Vagina (tissue), 2 donors: ENCODE measurements at regions of chr16 and their contacts with region 1.

Region 1: GRCh38 chr16:74998481-74999218 is at the start of gene ZNRF1:
- DNase-seq: peak in 1 of 2 donors; percentile 93
- H3K4me3 ChIP-seq: peak within 1 kb of the TSS; percentile 76 to 78
- H3K27ac ChIP-seq: peak within 1 kb of the TSS; percentile 85
- H3K4me1 ChIP-seq: peaks cover 36% of the 10 kb centered on the region
- H3K27me3 ChIP-seq: no peaks in the 10 kb centered on the region
- CTCF ChIP-seq: peak; percentile 41 to 90 (median 85)
- POLR2A ChIP-seq: peak in 1 of 2 donors; percentile 34
- total RNA-seq, gene ZNRF1: 20.1 TPM

Region 2: DNA sequence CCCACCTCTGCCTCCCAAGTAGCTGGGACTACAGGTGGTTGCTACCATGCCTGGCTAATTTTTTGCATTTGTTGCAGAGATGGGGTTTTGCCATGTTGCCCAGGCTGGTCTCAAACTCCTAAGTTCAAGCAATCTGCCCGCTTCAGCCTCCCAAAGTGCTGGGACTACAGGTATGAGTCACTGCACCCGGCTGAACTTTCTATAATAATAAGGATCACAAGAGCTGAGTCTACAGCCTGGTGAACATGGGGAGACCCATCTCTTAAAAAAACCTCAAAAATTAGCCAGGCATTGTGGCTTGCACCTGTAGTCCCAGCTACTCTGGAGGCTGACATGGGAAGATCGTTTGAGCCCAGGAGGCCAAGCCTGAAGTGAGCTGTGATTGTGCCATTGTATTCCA is 67.2 kb before region 1 on chr16:
- intact Hi-C with region 1: no loop called
- DNase-seq: no peak
- H3K4me3 ChIP-seq: no peak overlapping the region
- H3K27ac ChIP-seq: no peak overlapping the region
- H3K4me1 ChIP-seq: no peaks in the 10 kb centered on the region
- H3K27me3 ChIP-seq: no peaks in the 10 kb centered on the region
- CTCF ChIP-seq: no peak
- POLR2A ChIP-seq: no peak

Region 3: DNA sequence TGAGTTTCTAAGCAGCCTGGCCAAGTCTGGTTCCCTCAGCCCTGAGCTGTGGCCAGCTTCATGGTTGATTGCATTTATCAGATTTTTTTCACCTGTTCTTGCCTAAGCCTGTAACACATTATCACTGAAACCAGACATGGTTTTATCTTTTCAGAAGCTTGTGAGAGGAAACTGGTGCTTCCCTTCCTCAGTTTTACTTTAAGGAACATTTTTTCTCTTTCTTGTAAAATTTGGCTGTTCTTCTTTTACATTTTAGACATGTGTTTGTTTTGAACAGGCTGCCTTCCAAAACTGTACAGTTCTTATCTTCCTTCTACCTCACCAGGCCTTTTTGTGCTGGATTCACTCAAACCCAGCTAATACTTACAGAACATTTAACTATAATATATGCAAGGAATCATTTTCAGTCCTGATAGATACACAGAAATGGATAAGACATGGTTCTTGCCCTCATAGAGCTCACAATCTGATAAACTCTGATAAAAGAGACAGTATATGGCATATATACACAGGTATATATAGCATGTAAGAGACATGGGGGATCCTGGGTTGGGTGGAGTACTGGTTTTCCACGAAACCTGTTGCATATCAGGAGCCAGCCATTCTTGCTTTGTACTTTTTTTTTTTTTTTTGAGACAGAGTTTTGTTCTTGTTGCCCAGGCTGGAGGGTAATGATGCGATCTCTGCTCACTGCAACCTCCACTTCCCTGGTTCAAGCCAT is 44.7 kb after region 1 on chr16:
- intact Hi-C with region 1: loop called (anchors 5 kb)
- DNase-seq: no peak
- H3K4me3 ChIP-seq: no peak overlapping the region
- H3K27ac ChIP-seq: peak overlapping the region; percentile 50
- H3K4me1 ChIP-seq: peaks cover 47% of the 10 kb centered on the region
- H3K27me3 ChIP-seq: no peaks in the 10 kb centered on the region
- CTCF ChIP-seq: no peak
- POLR2A ChIP-seq: no peak

Region 4: GRCh38 chr16:75110637-75111513 is 112.2 kb after region 1 on chr16:
- intact Hi-C with region 1: loop called (anchors 1 kb)
- DNase-seq: peak; percentile 95 to 96
- H3K4me3 ChIP-seq: peak overlapping the region; percentile 26 to 41
- H3K27ac ChIP-seq: peak overlapping the region; percentile 81
- H3K4me1 ChIP-seq: peaks cover 67% of the 10 kb centered on the region
- H3K27me3 ChIP-seq: no peaks in the 10 kb centered on the region
- CTCF ChIP-seq: peak; percentile 70 to 97 (median 83)
- POLR2A ChIP-seq: no peak